PC-9 (cell line): ENCODE measurements at regions of chr18 and their contacts with region 1.

Region 1: GRCh38 chr18:74896390-74896991 is 298.8 kb downstream of the ZNF407 start:
- DNase-seq: peak; percentile 52 to 54
- H3K4me3 ChIP-seq: no peak overlapping the region
- H3K27ac ChIP-seq: no peak overlapping the region
- H3K4me1 ChIP-seq: no peaks in the 10 kb centered on the region
- H3K27me3 ChIP-seq: no peaks in the 10 kb centered on the region
- CTCF ChIP-seq: peak; percentile 76

Region 2: DNA sequence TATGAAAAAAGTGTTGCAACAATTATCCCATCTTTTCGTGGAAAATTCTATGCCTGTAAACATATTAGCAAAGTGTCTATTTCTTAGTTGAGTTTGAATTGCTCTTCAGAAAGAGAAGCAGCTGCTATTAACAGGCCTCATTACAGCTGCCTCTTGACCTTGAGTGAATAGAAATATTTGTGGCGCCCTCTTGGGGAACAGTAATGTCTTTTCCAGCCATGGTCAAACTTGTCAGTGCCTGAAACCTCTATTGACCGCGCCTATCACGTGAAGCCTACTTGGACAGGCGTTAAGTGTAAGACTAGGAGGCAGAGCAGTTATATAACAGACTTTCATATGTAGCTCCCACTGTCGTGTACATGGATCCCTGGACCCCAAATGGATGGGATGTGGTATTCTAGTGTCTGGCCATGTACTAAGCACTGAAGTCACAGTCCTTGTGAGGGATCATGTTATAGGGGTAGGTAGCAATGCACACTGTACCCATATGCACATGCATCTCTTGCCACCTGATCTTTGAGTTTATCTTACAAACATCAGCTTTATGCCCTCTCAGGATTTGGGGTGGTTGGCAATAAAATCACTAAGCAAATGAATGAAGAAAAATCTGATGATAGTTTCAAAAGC is 67.4 kb after region 1 on chr18:
- CTCF ChIA-PET with region 1: no interaction called
- POLR2A ChIA-PET with region 1: no interaction called
- intact Hi-C with region 1: loop called (anchors 5 kb)
- DNase-seq: peak in 1 of 2 experiments; percentile 7
- H3K4me3 ChIP-seq: no peak overlapping the region
- H3K27ac ChIP-seq: no peak overlapping the region
- H3K4me1 ChIP-seq: no peaks in the 10 kb centered on the region
- H3K27me3 ChIP-seq: no peaks in the 10 kb centered on the region
- CTCF ChIP-seq: peak; percentile 50; the same call in 1 of the 2 replicates

Region 3: GRCh38 chr18:75041586-75041985 is 145.1 kb after region 1 on chr18:
- CTCF ChIA-PET with region 1: no interaction called
- POLR2A ChIA-PET with region 1: no interaction called
- intact Hi-C with region 1: loop called (anchors 1 kb)
- DNase-seq: no peak
- H3K4me3 ChIP-seq: no peak overlapping the region
- H3K27ac ChIP-seq: no peak overlapping the region
- H3K4me1 ChIP-seq: no peaks in the 10 kb centered on the region
- H3K27me3 ChIP-seq: no peaks in the 10 kb centered on the region
- CTCF ChIP-seq: peak; percentile 69

Region 4: DNA sequence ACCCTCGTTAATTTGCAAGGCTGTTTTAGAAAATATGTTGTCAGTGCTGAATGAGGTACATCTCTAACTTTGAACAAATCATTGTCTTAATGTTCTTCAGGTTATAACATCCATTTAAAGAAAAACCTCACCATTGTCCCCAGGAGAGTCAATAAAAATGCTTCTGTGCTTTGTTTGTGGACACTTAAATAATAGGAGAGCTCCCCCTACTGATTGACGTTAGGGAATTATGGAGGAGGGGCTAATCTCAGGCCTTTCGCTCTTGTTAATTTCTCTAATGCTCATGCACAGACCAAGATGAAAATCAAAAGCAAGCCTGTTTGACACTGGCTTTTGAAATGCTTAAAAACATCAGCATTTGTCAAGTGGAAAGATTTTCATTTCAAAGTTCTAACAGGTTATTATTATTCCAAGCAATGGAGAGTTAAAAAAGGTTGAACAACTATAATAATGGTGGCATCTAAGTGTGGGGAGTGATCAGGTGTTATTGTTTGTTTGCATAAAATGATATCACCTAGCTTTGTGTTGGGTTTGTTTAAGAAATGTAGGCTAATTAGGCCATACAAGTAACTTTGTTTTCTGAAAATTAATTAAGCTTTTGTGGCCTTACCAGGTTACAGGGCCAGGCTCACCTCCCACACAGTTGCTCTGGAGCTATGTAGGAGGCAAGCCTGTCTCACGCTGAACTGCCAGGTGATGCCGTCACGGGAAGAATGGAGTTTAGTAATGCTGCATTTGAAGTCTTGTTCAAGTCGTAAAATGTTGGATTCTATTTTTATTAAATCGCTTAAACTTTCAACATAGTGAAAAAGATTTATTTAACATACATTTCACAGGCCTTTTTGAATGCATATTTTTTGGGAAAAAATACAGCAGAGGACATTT is 582.7 kb after region 1 on chr18:
- CTCF ChIA-PET with region 1: no interaction called
- POLR2A ChIA-PET with region 1: no interaction called
- intact Hi-C with region 1: loop called (anchors 2 kb)
- DNase-seq: no peak
- H3K4me3 ChIP-seq: no peak overlapping the region
- H3K27ac ChIP-seq: no peak overlapping the region
- H3K4me1 ChIP-seq: no peaks in the 10 kb centered on the region
- H3K27me3 ChIP-seq: peaks cover 5% of the 10 kb centered on the region; the same call in 1 of the 2 replicates
- CTCF ChIP-seq: peak; percentile 75